OCI-LY7 (cell line): ENCODE measurements at regions of chr19 and their contacts with region 1.

Region 1: GRCh38 chr19:37931881-37932655 is 25.1 kb downstream of the SIPA1L3 start:
- DNase-seq: peak; percentile 60
- H3K4me3 ChIP-seq: peak overlapping the region; percentile 65
- H3K27ac ChIP-seq: peak overlapping the region; percentile 61
- H3K4me1 ChIP-seq: peaks cover 68% of the 10 kb centered on the region
- CTCF ChIP-seq: peak; percentile 31; the same call in 1 of the 2 replicates

Region 2: GRCh38 chr19:37706052-37706605 is 225.9 kb before region 1 on chr19:
- CTCF ChIA-PET with region 1: no interaction called
- POLR2A ChIA-PET with region 1: no interaction called
- intact Hi-C with region 1: no loop called
- DNase-seq: no peak
- H3K4me3 ChIP-seq: no peak overlapping the region
- H3K27ac ChIP-seq: no peak overlapping the region
- H3K4me1 ChIP-seq: no peaks in the 10 kb centered on the region
- CTCF ChIP-seq: no peak

Region 3: GRCh38 chr19:37803250-37803854 is 128.7 kb before region 1 on chr19:
- CTCF ChIA-PET with region 1: no interaction called
- POLR2A ChIA-PET with region 1: no interaction called
- intact Hi-C with region 1: no loop called
- DNase-seq: no peak
- H3K4me3 ChIP-seq: no peak overlapping the region
- H3K27ac ChIP-seq: no peak overlapping the region
- H3K4me1 ChIP-seq: no peaks in the 10 kb centered on the region
- CTCF ChIP-seq: no peak

Region 4: GRCh38 chr19:37914908-37915307 is 17.2 kb before region 1 on chr19:
- CTCF ChIA-PET with region 1: no interaction called
- POLR2A ChIA-PET with region 1: interaction called, 26 read pairs
- intact Hi-C with region 1: loop called (anchors 1 kb)
- DNase-seq: peak; percentile 88
- H3K4me3 ChIP-seq: peak overlapping the region; percentile 58
- H3K27ac ChIP-seq: peak overlapping the region; percentile 87
- H3K4me1 ChIP-seq: peaks cover 78% of the 10 kb centered on the region
- CTCF ChIP-seq: no peak

Region 5: DNA sequence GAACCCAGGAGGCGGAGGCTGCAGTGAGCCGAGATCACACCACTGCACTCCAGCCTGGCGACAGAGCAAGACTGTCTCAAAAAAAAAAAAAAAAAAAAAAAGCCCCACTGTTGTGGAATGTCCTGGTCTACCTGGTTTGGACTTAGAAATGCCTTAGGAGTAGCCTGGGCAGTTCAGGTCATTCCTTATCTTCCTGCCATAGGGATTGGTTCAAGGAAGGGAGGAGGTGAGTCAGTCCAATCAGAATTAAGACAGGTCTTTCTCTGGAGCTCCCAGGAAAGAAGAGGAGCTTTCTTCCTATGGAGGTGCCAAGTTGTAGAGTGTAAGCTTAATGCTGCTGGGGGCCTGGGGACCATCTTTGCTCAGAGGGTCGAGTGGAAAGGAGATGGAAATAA is 19.7 kb after region 1 on chr19:
- CTCF ChIA-PET with region 1: no interaction called
- POLR2A ChIA-PET with region 1: interaction called, 10 read pairs
- intact Hi-C with region 1: no loop called
- DNase-seq: no peak
- H3K4me3 ChIP-seq: no peak overlapping the region
- H3K27ac ChIP-seq: no peak overlapping the region
- H3K4me1 ChIP-seq: peaks cover 44% of the 10 kb centered on the region
- CTCF ChIP-seq: no peak

Region 6: GRCh38 chr19:37963190-37963936 is 31.3 kb after region 1 on chr19:
- CTCF ChIA-PET with region 1: no interaction called
- POLR2A ChIA-PET with region 1: interaction called, 8 read pairs
- intact Hi-C with region 1: loop called (anchors 5 kb)
- DNase-seq: peak; percentile 26
- H3K4me3 ChIP-seq: no peak overlapping the region
- H3K27ac ChIP-seq: peak overlapping the region; percentile 69
- H3K4me1 ChIP-seq: peaks cover 44% of the 10 kb centered on the region
- CTCF ChIP-seq: peak; percentile 21; the same call in 1 of the 2 replicates

Region 7: GRCh38 chr19:37979547-37980082 is 47.5 kb after region 1 on chr19:
- CTCF ChIA-PET with region 1: interaction called, 3 read pairs
- POLR2A ChIA-PET with region 1: interaction called, 6 read pairs
- intact Hi-C with region 1: loop called (anchors 1 kb)
- DNase-seq: peak; percentile 81
- H3K4me3 ChIP-seq: peak overlapping the region; percentile 56
- H3K27ac ChIP-seq: peak overlapping the region; percentile 100
- H3K4me1 ChIP-seq: peaks cover 90% of the 10 kb centered on the region
- CTCF ChIP-seq: no peak

Region 8: GRCh38 chr19:38033658-38034498 is 101.8 kb after region 1 on chr19:
- CTCF ChIA-PET with region 1: no interaction called
- POLR2A ChIA-PET with region 1: interaction called, 14 read pairs
- intact Hi-C with region 1: loop called (anchors 5 kb)
- DNase-seq: peak; percentile 95
- H3K4me3 ChIP-seq: peak overlapping the region; percentile 56
- H3K27ac ChIP-seq: peak overlapping the region; percentile 97
- H3K4me1 ChIP-seq: peaks cover 76% of the 10 kb centered on the region
- CTCF ChIP-seq: peak; percentile 61